CD8-positive, alpha-beta T cell (primary cell): ENCODE measurements at regions of chr5 and their contacts with region 1.

Region 1: DNA sequence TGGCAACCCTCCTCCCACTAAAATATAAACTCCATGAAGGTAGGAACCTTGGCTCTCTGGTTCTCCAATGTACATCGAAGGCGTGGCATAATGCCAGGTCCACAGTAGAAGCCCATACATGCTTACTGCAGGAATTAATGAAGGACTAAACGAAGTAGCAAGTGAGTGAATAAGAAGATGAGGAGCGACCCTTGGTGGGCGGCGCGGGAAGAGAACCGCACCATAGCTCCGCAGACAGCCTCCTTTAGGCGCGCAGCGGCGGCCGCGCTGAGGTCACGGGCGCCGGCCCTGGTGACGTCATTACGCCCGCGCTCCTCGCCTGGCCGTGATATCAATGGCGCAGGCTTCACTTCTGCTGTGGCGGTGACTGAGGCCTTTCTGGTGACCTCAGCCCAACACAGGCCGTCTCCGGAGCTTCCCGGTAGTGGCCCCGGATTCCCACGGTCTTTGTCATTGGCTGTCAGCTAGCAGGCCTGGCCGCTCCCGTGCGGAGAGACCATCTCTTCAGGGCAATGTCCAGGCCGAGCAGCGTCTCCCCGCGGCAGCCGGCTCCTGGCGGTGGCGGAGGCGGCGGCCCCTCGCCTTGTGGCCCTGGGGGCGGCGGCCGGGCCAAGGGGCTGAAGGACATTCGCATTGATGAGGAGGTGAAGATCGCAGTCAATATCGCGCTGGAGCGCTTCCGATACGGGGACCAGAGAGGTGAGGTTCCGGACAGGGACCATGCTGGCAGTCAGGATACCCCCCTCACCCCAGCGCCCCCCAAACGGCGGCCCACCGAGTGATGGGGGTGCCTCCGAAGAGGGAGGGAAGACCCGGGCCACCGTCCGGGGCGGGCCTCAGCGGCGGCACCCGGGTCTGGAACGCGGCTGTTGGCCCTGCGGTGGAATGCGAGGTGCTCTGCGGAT is at the start of gene YTHDC2:
- DNase-seq: peak; percentile 77 to 94 (median 86)
- ATAC-seq: peak; percentile 95
- H3K4me3 ChIP-seq: peak within 1 kb of the TSS; percentile 64 to 78
- H3K4me3 Mint-ChIP-seq: peak within 1 kb of the TSS; percentile 90
- H3K27ac ChIP-seq: peak within 1 kb of the TSS; percentile 86 to 93
- H3K27ac Mint-ChIP-seq: peak within 1 kb of the TSS; percentile 95
- H3K4me1 ChIP-seq: peaks cover 19% of the 10 kb centered on the region
- H3K4me1 Mint-ChIP-seq: peaks cover 38% of the 10 kb centered on the region
- H3K27me3 ChIP-seq: no peaks in the 10 kb centered on the region
- H3K27me3 Mint-ChIP-seq: peaks cover 9% of the 10 kb centered on the region
- CTCF ChIP-seq: no peak
- total RNA-seq, gene YTHDC2: 35.4 to 36.1 TPM

Region 2: GRCh38 chr5:111512375-111513130 is 2001.1 kb before region 1 on chr5 and contains the start of gene STARD4:
- CTCF ChIA-PET with region 1: no interaction called
- POLR2A ChIA-PET with region 1: no interaction called
- intact Hi-C with region 1: loop called in 1 of 2 experiments (anchors 5 kb)
- DNase-seq: peak; percentile 89 to 97 (median 95)
- ATAC-seq: peak; percentile 94
- H3K4me3 ChIP-seq: peak within 1 kb of the TSS; percentile 96 to 97
- H3K4me3 Mint-ChIP-seq: peak within 1 kb of the TSS; percentile 96
- H3K27ac ChIP-seq: peak within 1 kb of the TSS; percentile 75 to 92
- H3K27ac Mint-ChIP-seq: peak within 1 kb of the TSS; percentile 95
- H3K4me1 ChIP-seq: peaks cover 26% of the 10 kb centered on the region
- H3K4me1 Mint-ChIP-seq: peaks cover 41% of the 10 kb centered on the region
- H3K27me3 ChIP-seq: no peaks in the 10 kb centered on the region
- H3K27me3 Mint-ChIP-seq: no peaks in the 10 kb centered on the region
- CTCF ChIP-seq: no peak
- total RNA-seq, gene STARD4: 31.7 to 32.4 TPM

Region 3: DNA sequence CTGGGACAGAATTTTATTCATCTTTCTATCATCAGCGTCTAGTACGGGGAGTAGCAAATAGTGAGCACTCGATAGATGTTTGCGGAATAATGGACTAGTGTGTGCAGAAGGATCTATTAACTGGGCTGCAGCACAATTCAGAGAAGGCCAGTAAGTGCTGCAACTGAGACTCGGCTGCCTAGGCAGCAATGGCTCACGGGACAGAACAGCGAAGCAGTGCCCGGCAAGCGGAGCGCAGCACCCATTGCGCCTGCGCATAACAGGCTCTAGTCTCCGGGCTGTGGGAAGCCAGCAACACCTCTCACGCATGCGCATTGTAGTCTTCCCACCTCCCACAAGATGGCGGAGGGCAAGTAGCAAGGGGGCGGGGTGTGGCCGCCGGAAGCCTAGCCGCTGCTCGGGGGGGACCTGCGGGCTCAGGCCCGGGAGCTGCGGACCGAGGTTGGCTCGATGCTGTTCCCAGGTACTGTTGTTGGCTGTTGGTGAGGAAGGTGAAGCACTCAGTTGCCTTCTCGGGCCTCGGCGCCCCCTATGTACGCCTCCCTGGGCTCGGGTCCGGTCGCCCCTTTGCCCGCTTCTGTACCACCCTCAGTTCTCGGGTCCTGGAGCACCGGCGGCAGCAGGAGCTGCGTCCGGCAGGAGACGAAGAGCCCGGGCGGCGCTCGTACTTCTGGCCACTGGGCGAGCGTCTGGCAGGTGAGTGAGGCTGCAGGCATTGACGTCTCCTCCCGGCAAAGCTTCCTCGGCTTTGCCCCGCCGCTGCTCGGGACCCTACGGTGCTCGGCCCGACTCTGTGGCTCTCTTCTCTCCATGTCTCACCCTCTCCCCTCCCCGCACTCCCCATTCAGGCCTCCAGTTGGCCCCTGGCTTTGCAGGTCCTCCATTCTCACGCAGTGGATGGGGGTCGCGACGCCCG is 806.2 kb before region 1 on chr5:
- CTCF ChIA-PET with region 1: no interaction called
- POLR2A ChIA-PET with region 1: no interaction called
- intact Hi-C with region 1: loop called (anchors 5 kb)
- DNase-seq: peak; percentile 91 to 99 (median 96)
- ATAC-seq: peak; percentile 92
- H3K4me3 ChIP-seq: peak overlapping the region; percentile 83 to 99
- H3K4me3 Mint-ChIP-seq: peak overlapping the region; percentile 92
- H3K27ac ChIP-seq: peak overlapping the region; percentile 75 to 84
- H3K27ac Mint-ChIP-seq: peak overlapping the region; percentile 92
- H3K4me1 ChIP-seq: peaks cover 43% of the 10 kb centered on the region
- H3K4me1 Mint-ChIP-seq: peaks cover 57% of the 10 kb centered on the region
- H3K27me3 ChIP-seq: no peaks in the 10 kb centered on the region
- H3K27me3 Mint-ChIP-seq: no peaks in the 10 kb centered on the region
- CTCF ChIP-seq: no peak

Region 4: GRCh38 chr5:113294311-113295110 is 219.1 kb before region 1 on chr5:
- CTCF ChIA-PET with region 1: no interaction called
- POLR2A ChIA-PET with region 1: no interaction called
- intact Hi-C with region 1: loop called in 1 of 2 experiments (anchors 2 kb)
- DNase-seq: peak; percentile 56 to 84 (median 75)
- ATAC-seq: peak; percentile 91
- H3K4me3 ChIP-seq: peak overlapping the region; percentile 70 to 76
- H3K4me3 Mint-ChIP-seq: peak overlapping the region; percentile 94
- H3K27ac ChIP-seq: peak overlapping the region; percentile 20 to 46
- H3K27ac Mint-ChIP-seq: peak overlapping the region; percentile 75
- H3K4me1 ChIP-seq: peaks cover 17% of the 10 kb centered on the region
- H3K4me1 Mint-ChIP-seq: peaks cover 34% of the 10 kb centered on the region
- H3K27me3 ChIP-seq: peaks cover 0 to 9% of the 10 kb centered on the region in 2 experiments
- H3K27me3 Mint-ChIP-seq: peaks cover 16% of the 10 kb centered on the region
- CTCF ChIP-seq: no peak

Region 5: GRCh38 chr5:113378959-113379541 is 134.6 kb before region 1 on chr5:
- CTCF ChIA-PET with region 1: interaction called, 9 read pairs
- POLR2A ChIA-PET with region 1: no interaction called
- intact Hi-C with region 1: loop called (anchors 2 to 5 kb)
- DNase-seq: peak; percentile 7 to 72 (median 52)
- ATAC-seq: peak; percentile 64
- H3K4me3 ChIP-seq: no peak overlapping the region
- H3K4me3 Mint-ChIP-seq: peak overlapping the region; percentile 27
- H3K27ac ChIP-seq: no peak overlapping the region
- H3K27ac Mint-ChIP-seq: no peak overlapping the region
- H3K4me1 ChIP-seq: peaks cover 29% of the 10 kb centered on the region
- H3K4me1 Mint-ChIP-seq: peaks cover 46% of the 10 kb centered on the region
- H3K27me3 ChIP-seq: no peaks in the 10 kb centered on the region
- H3K27me3 Mint-ChIP-seq: peaks cover 16% of the 10 kb centered on the region
- CTCF ChIP-seq: peak; percentile 76

Region 6: GRCh38 chr5:113474100-113474728 is 39.4 kb before region 1 on chr5:
- CTCF ChIA-PET with region 1: no interaction called
- POLR2A ChIA-PET with region 1: no interaction called
- intact Hi-C with region 1: no loop called
- DNase-seq: no peak
- ATAC-seq: no peak
- H3K4me3 ChIP-seq: no peak overlapping the region
- H3K4me3 Mint-ChIP-seq: no peak overlapping the region
- H3K27ac ChIP-seq: no peak overlapping the region
- H3K27ac Mint-ChIP-seq: no peak overlapping the region
- H3K4me1 ChIP-seq: no peaks in the 10 kb centered on the region
- H3K4me1 Mint-ChIP-seq: no peaks in the 10 kb centered on the region
- H3K27me3 ChIP-seq: peaks cover 0 to 3% of the 10 kb centered on the region in 2 experiments
- H3K27me3 Mint-ChIP-seq: peaks cover 28% of the 10 kb centered on the region
- CTCF ChIP-seq: no peak

Region 7: GRCh38 chr5:114210662-114211061 is 697.0 kb after region 1 on chr5:
- CTCF ChIA-PET with region 1: no interaction called
- POLR2A ChIA-PET with region 1: no interaction called
- intact Hi-C with region 1: no loop called
- DNase-seq: no peak
- ATAC-seq: no peak
- H3K4me3 ChIP-seq: no peak overlapping the region
- H3K4me3 Mint-ChIP-seq: no peak overlapping the region
- H3K27ac ChIP-seq: no peak overlapping the region
- H3K27ac Mint-ChIP-seq: no peak overlapping the region
- H3K4me1 ChIP-seq: no peaks in the 10 kb centered on the region
- H3K4me1 Mint-ChIP-seq: no peaks in the 10 kb centered on the region
- H3K27me3 ChIP-seq: no peaks in the 10 kb centered on the region
- H3K27me3 Mint-ChIP-seq: no peaks in the 10 kb centered on the region
- CTCF ChIP-seq: no peak

Region 8: DNA sequence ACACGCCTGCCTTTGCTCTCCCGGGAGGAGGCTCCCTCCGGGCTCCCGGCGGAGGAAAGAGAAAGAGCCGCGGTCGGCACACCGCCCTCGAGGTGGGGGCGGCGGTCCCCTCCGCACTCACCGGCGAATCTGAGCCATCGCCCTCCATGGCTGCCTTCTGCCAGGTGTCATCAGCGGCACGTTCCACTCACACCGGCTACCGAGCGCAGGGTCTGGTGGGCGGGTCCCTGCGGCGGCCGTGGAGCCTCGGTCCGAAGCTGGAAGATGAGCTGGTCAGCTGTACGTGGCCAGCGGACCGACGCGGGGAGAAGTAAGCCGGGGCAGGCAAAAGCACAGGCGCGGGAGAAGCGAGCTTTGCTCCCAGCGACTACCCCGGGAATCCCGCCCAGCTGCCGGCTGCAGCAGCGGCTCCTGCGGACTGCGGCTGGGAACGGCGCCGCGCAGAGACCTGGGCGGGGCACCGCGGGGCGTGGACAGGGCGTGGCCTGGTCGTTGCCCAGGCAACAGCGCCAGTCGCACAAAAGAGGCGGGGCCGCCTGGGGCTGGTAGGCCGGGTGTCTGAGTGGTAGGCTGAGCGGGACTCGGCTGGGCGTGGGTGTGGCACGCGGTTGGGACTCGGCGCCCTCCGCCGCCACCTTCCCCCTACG is 1656.0 kb after region 1 on chr5 and contains the start of gene TRIM36:
- CTCF ChIA-PET with region 1: no interaction called
- POLR2A ChIA-PET with region 1: no interaction called
- intact Hi-C with region 1: loop called in 1 of 2 experiments (anchors 10 kb)
- DNase-seq: peak; percentile 75 to 93 (median 88)
- ATAC-seq: peak; percentile 88
- H3K4me3 ChIP-seq: peak within 1 kb of the TSS; percentile 73 to 78
- H3K4me3 Mint-ChIP-seq: peak within 1 kb of the TSS; percentile 82
- H3K27ac ChIP-seq: no peak within 1 kb of the TSS
- H3K27ac Mint-ChIP-seq: no peak within 1 kb of the TSS
- H3K4me1 ChIP-seq: peaks cover 18% of the 10 kb centered on the region
- H3K4me1 Mint-ChIP-seq: peaks cover 13% of the 10 kb centered on the region
- H3K27me3 ChIP-seq: peaks cover 21 to 36% of the 10 kb centered on the region in 2 experiments
- H3K27me3 Mint-ChIP-seq: peaks cover 56% of the 10 kb centered on the region
- CTCF ChIP-seq: no peak
- total RNA-seq, gene TRIM36: not detected